GM12878 (cell line): ENCODE measurements at regions of chr11 and their contacts with region 1.

Region 1: DNA sequence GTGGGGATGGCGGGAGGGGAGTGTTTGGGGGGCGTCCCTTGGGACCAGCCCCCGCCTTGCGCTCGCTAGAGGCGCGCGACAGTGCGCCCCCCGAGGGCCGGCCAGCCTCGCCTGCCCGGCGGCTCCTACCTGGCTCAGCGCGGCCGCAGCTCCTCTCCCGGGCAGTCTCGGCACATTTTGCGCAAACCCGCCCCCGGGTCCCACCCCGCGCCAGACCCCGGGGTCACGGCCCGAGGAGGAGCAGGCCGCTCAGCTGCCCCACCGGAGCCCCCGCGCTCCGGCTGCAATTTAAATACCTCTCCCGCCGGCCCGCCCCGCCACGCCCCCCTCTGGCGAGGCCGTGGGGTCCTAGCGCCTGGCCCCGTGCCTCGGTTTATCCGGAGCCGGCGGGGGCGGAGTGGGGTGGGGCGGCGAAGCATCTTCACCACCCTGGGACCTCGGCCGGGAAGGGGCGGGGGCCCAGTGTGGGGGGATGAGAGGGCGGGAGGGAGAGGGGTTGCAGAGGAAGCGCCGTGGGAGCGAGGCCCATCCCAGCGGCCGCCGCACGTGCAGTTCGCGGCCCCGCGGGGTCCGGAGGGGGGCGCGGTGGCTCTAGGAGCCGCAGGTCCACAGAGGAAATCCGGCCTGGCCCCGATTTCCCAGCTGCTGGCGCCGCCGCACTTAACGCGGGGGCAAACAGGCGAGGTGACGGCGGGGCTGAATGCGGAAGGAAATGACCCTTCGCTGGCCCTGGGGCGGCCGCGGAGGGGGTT is at the start of gene LRRC32:
- DNase-seq: no peak
- ATAC-seq: peak; percentile 3
- H3K4me3 ChIP-seq: peak within 1 kb of the TSS; percentile 62
- H3K27ac ChIP-seq: peak within 1 kb of the TSS; percentile 47; the same call in 1 of the 2 replicates
- H3K4me1 ChIP-seq: peaks cover 76% of the 10 kb centered on the region
- H3K27me3 ChIP-seq: peaks cover 1 to 8% of the 10 kb centered on the region in 2 experiments; a peak in 2 of 4 replicates
- CTCF ChIP-seq: peak in 1 of 3 experiments; percentile 16; a peak in 2 of 6 replicates
- EP300 ChIP-seq: no peak
- POLR2A ChIP-seq: no peak; the same call in 1 of the 2 replicates
- RAD21 ChIP-seq: no peak
- polyA plus RNA-seq, gene LRRC32: 4.3 to 7.4 TPM

Region 2: DNA sequence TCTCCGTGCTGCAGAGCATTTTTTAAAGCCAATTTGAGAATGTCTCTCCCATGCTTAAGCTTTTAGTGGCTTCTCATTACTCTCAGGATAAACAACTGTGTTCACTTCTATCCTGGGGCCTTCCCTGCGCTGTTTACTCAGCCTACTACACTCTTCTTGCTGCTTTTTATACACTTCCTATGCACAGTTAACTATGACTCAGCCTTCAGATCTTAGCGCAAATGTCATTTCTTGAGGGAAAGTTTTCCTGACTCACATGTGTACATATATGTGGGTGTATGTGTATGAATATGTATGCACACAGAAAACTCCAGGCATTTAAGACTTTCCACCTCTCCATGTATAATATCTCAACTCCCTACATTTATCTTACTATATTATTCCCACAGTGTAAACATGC is 299.5 kb before region 1 on chr11:
- CTCF ChIA-PET with region 1: no interaction called
- POLR2A ChIA-PET with region 1: no interaction called
- RAD21 ChIA-PET with region 1: no interaction called
- SMC1A ChIA-PET with region 1: no interaction called
- in situ Hi-C with region 1: no loop called
- intact Hi-C with region 1: loop called (anchors 10 kb)
- DNase-seq: peak; percentile 37
- ATAC-seq: peak; percentile 83
- H3K4me3 ChIP-seq: no peak overlapping the region
- H3K27ac ChIP-seq: no peak overlapping the region
- H3K4me1 ChIP-seq: peaks cover 2% of the 10 kb centered on the region
- H3K27me3 ChIP-seq: no peaks in the 10 kb centered on the region
- CTCF ChIP-seq: no peak
- EP300 ChIP-seq: no peak
- POLR2A ChIP-seq: no peak
- RAD21 ChIP-seq: no peak

Region 3: GRCh38 chr11:76598426-76598839 is 72.2 kb before region 1 on chr11:
- CTCF ChIA-PET with region 1: interaction called, 273 read pairs
- POLR2A ChIA-PET with region 1: no interaction called
- RAD21 ChIA-PET with region 1: interaction called, 187 read pairs
- SMC1A ChIA-PET with region 1: interaction called, 48 read pairs
- in situ Hi-C with region 1: no loop called
- intact Hi-C with region 1: loop called (anchors 2 kb)
- DNase-seq: peak; percentile 12
- ATAC-seq: peak; percentile 99
- H3K4me3 ChIP-seq: no peak overlapping the region
- H3K27ac ChIP-seq: no peak overlapping the region
- H3K4me1 ChIP-seq: no peaks in the 10 kb centered on the region
- H3K27me3 ChIP-seq: peaks cover 0 to 5% of the 10 kb centered on the region in 2 experiments; a peak in 3 of 4 replicates
- CTCF ChIP-seq: peak; percentile 68 to 82 (median 80)
- EP300 ChIP-seq: no peak
- POLR2A ChIP-seq: no peak
- RAD21 ChIP-seq: peak; percentile 85

Region 4: DNA sequence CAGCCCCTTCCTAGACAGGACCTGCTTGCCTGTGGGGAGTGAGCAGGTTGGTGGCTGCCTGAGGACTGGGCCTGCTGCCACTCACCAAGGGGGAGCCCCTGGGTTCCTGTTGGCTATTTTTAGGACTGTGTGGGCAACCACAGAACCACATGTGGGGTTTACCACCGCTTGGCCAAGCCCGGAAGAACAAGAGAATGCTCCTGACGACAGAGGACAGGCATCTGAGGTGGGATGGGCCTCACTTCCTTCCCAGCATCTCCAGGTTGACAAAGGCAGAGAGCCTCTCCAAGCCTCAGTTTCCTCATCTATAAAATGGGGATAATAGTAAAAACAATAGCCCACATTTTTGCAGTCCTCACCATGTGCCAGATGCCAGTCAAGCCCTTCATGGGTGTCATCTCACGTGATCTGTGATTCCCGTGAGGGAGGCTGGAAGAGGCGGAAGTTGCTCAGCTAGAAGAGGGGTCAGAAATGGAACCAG is 43.7 kb before region 1 on chr11:
- CTCF ChIA-PET with region 1: interaction called, 70 read pairs
- POLR2A ChIA-PET with region 1: interaction called, 33 read pairs
- RAD21 ChIA-PET with region 1: interaction called, 145 read pairs
- SMC1A ChIA-PET with region 1: interaction called, 50 read pairs
- in situ Hi-C with region 1: loop called (anchors 5 kb)
- intact Hi-C with region 1: loop called (anchors 2 kb)
- DNase-seq: peak; percentile 88
- ATAC-seq: peak; percentile 79
- H3K4me3 ChIP-seq: no peak overlapping the region
- H3K27ac ChIP-seq: no peak overlapping the region
- H3K4me1 ChIP-seq: peaks cover 41% of the 10 kb centered on the region
- H3K27me3 ChIP-seq: peaks cover 0 to 13% of the 10 kb centered on the region in 2 experiments; a peak in 1 of 4 replicates
- CTCF ChIP-seq: no peak
- EP300 ChIP-seq: peak; percentile 66 to 85
- POLR2A ChIP-seq: no peak
- RAD21 ChIP-seq: no peak

Region 5: GRCh38 chr11:76680518-76681425 is 10.1 kb after region 1 on chr11:
- CTCF ChIA-PET with region 1: interaction called, 23 read pairs
- POLR2A ChIA-PET with region 1: no interaction called
- RAD21 ChIA-PET with region 1: interaction called, 23 read pairs
- SMC1A ChIA-PET with region 1: interaction called, 9 read pairs
- in situ Hi-C with region 1: no loop called
- intact Hi-C with region 1: no loop called
- DNase-seq: no peak
- ATAC-seq: peak; percentile 91
- H3K4me3 ChIP-seq: no peak overlapping the region
- H3K27ac ChIP-seq: no peak overlapping the region
- H3K4me1 ChIP-seq: peaks cover 7% of the 10 kb centered on the region
- H3K27me3 ChIP-seq: no peaks in the 10 kb centered on the region; a peak in 1 of 4 replicates
- CTCF ChIP-seq: peak; percentile 71 to 92 (median 87); a peak in 5 of 6 replicates
- EP300 ChIP-seq: no peak
- POLR2A ChIP-seq: no peak
- RAD21 ChIP-seq: peak; percentile 92